Naive thymus-derived CD4-positive, alpha-beta T cell (primary cell): ENCODE measurements at regions of chr22 and their contacts with region 1.

Region 1: DNA sequence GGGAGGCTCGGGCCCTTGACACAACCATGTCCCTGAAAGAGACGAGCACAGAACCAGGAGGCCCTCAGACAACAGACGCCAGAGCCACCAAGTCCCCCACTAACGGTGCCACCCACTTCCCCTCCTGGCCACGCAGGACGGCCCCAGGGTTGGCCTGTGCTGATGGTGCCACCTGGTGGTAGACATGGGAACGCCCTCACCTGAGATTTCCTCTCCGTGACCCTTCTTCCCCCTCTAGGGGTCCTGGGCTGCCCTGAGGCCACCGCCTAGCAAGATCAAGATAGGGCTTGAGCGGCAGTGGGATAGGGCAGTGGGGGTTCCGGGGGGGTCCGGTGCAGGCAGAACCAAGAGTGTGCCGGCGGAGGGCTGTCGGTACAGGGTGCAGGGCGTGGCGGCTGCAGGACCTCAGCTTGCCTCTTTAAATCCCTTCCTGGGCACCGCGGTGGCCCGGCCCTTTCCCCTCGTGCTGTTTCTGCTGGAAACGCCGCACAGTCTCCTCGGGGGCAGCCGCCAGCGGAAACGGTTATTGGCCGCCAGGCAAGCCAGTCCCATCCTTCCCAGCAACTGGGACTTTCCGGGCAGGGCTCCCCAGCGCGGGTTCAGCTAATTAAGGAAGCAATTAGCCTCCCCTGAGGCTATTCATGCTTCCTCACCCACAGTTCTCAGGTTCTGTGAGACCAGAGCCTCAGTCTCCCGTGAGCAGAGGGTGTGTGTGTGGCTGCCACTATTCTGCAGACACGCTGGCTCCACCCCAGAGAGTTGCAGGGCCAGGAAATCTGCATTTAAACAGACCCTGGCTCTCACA is 5.5 kb upstream of the NFAM1 start:
- DNase-seq: peak; percentile 71 to 90 (median 81)
- ATAC-seq: peak; percentile 96
- H3K4me3 ChIP-seq: peak overlapping the region; percentile 67
- H3K4me3 Mint-ChIP-seq: peak overlapping the region; percentile 65 to 88 (median 74)
- H3K27ac ChIP-seq: no peak overlapping the region
- H3K27ac Mint-ChIP-seq: peak overlapping the region in 4 of 9 donors; percentile 48 to 87 (median 78)
- H3K4me1 ChIP-seq: peaks cover 0 to 7% of the 10 kb centered on the region in 2 donors
- H3K4me1 Mint-ChIP-seq: peaks cover 0 to 33% (median 12%) of the 10 kb centered on the region in 7 donors
- H3K27me3 ChIP-seq: no peaks in the 10 kb centered on the region
- H3K27me3 Mint-ChIP-seq: peaks cover 0 to 11% (median 0%) of the 10 kb centered on the region in 5 donors

Region 2: GRCh38 chr22:41957941-41958556 is 479.6 kb before region 1 on chr22:
- CTCF ChIA-PET with region 1: no interaction called
- POLR2A ChIA-PET with region 1: no interaction called
- intact Hi-C with region 1: loop called in 1 of 2 experiments (anchors 1 kb)
- DNase-seq: peak in 2 of 9 donors; percentile 23 to 28
- ATAC-seq: peak; percentile 50
- H3K4me3 ChIP-seq: no peak overlapping the region
- H3K4me3 Mint-ChIP-seq: peak overlapping the region in 6 of 10 donors; percentile 3 to 67 (median 50)
- H3K27ac ChIP-seq: no peak overlapping the region
- H3K27ac Mint-ChIP-seq: no peak overlapping the region
- H3K4me1 ChIP-seq: peaks cover 3 to 4% of the 10 kb centered on the region in 2 donors
- H3K4me1 Mint-ChIP-seq: peaks cover 0 to 5% (median 4%) of the 10 kb centered on the region in 7 donors
- H3K27me3 ChIP-seq: no peaks in the 10 kb centered on the region
- H3K27me3 Mint-ChIP-seq: peaks cover 0 to 1% (median 0%) of the 10 kb centered on the region in 5 donors

Region 3: DNA sequence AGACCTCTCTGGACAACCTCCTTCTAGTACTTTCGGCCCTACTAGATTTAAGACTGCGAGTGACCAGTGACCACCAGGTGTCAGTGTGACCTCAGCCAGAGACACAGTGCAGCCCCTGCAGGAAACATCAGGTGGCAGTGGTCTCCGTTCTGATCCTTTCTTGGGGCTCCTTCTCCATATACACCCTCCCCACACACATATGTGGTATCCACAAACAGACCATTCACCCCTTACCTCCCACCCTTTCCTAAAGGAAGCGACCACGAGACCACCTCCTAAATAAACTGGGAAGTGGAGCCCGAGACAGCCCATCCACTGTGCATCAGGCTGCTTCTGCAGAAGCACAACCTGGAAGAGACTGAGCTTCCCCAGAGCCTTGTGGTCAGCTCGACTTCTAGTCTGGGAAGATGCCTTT is 268.6 kb before region 1 on chr22:
- CTCF ChIA-PET with region 1: interaction called, 7 read pairs
- POLR2A ChIA-PET with region 1: no interaction called
- intact Hi-C with region 1: loop called (anchors 1 kb)
- DNase-seq: peak; percentile 36 to 77 (median 60)
- ATAC-seq: peak; percentile 89
- H3K4me3 ChIP-seq: no peak overlapping the region
- H3K4me3 Mint-ChIP-seq: no peak overlapping the region
- H3K27ac ChIP-seq: no peak overlapping the region
- H3K27ac Mint-ChIP-seq: peak overlapping the region in 1 of 9 donors; percentile 31
- H3K4me1 ChIP-seq: peaks cover 0 to 15% of the 10 kb centered on the region in 2 donors
- H3K4me1 Mint-ChIP-seq: peaks cover 13 to 39% (median 33%) of the 10 kb centered on the region in 7 donors
- H3K27me3 ChIP-seq: no peaks in the 10 kb centered on the region
- H3K27me3 Mint-ChIP-seq: no peaks in the 10 kb centered on the region

Region 4: DNA sequence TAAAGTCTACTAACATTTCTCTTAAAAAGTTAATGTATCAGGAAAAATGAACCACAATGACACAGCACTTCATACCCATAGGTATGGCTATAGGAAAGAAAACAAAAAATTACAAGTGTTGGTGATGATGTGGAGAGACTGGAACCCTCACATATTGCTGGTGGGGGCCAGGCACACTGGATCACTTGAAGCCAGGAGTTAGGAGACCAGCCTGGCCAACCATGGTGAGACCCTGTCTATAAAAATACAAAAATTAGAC is 194.0 kb before region 1 on chr22:
- CTCF ChIA-PET with region 1: no interaction called
- POLR2A ChIA-PET with region 1: no interaction called
- intact Hi-C with region 1: no loop called
- DNase-seq: no peak
- ATAC-seq: no peak
- H3K4me3 ChIP-seq: no peak overlapping the region
- H3K4me3 Mint-ChIP-seq: no peak overlapping the region
- H3K27ac ChIP-seq: no peak overlapping the region
- H3K27ac Mint-ChIP-seq: peak overlapping the region in 1 of 9 donors; percentile 18
- H3K4me1 ChIP-seq: peaks cover 0 to 3% of the 10 kb centered on the region in 2 donors
- H3K4me1 Mint-ChIP-seq: peaks cover 22 to 73% (median 64%) of the 10 kb centered on the region in 7 donors
- H3K27me3 ChIP-seq: no peaks in the 10 kb centered on the region
- H3K27me3 Mint-ChIP-seq: no peaks in the 10 kb centered on the region

Region 5: DNA sequence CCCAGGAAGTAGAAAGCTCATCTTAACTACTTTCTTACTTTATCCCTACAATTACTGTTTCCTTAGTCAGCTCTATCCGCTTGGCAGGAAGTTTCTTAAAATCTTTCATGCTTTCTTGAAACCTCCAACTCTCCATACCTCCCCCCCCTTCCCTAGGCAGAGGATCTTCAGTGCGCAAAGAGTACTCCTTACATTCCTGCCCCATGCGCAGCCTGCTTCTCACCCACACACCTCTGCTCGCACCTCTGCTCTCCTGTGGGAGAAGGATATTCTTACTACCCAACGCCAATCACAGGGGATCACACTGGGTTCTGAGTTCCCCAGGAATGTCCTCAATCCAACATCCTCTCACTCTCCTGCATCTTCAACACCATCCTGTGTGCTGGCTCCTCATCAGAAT is 179.6 kb before region 1 on chr22:
- CTCF ChIA-PET with region 1: no interaction called
- POLR2A ChIA-PET with region 1: no interaction called
- intact Hi-C with region 1: no loop called
- DNase-seq: no peak
- ATAC-seq: no peak
- H3K4me3 ChIP-seq: no peak overlapping the region
- H3K4me3 Mint-ChIP-seq: peak overlapping the region in 2 of 10 donors; percentile 10 to 57
- H3K27ac ChIP-seq: no peak overlapping the region
- H3K27ac Mint-ChIP-seq: peak overlapping the region in 3 of 9 donors; percentile 48 to 80 (median 48)
- H3K4me1 ChIP-seq: peaks cover 32 to 42% of the 10 kb centered on the region in 2 donors
- H3K4me1 Mint-ChIP-seq: peaks cover 50 to 93% (median 86%) of the 10 kb centered on the region in 7 donors
- H3K27me3 ChIP-seq: no peaks in the 10 kb centered on the region
- H3K27me3 Mint-ChIP-seq: no peaks in the 10 kb centered on the region

Region 6: GRCh38 chr22:42277988-42278776 is 159.5 kb before region 1 on chr22:
- CTCF ChIA-PET with region 1: interaction called, 15 read pairs
- POLR2A ChIA-PET with region 1: interaction called, 3 read pairs
- intact Hi-C with region 1: no loop called
- DNase-seq: no peak
- ATAC-seq: no peak
- H3K4me3 ChIP-seq: no peak overlapping the region
- H3K4me3 Mint-ChIP-seq: no peak overlapping the region
- H3K27ac ChIP-seq: no peak overlapping the region
- H3K27ac Mint-ChIP-seq: no peak overlapping the region
- H3K4me1 ChIP-seq: no peaks in the 10 kb centered on the region
- H3K4me1 Mint-ChIP-seq: peaks cover 10 to 29% (median 15%) of the 10 kb centered on the region in 7 donors
- H3K27me3 ChIP-seq: no peaks in the 10 kb centered on the region
- H3K27me3 Mint-ChIP-seq: peaks cover 0 to 15% (median 4%) of the 10 kb centered on the region in 5 donors

Region 7: DNA sequence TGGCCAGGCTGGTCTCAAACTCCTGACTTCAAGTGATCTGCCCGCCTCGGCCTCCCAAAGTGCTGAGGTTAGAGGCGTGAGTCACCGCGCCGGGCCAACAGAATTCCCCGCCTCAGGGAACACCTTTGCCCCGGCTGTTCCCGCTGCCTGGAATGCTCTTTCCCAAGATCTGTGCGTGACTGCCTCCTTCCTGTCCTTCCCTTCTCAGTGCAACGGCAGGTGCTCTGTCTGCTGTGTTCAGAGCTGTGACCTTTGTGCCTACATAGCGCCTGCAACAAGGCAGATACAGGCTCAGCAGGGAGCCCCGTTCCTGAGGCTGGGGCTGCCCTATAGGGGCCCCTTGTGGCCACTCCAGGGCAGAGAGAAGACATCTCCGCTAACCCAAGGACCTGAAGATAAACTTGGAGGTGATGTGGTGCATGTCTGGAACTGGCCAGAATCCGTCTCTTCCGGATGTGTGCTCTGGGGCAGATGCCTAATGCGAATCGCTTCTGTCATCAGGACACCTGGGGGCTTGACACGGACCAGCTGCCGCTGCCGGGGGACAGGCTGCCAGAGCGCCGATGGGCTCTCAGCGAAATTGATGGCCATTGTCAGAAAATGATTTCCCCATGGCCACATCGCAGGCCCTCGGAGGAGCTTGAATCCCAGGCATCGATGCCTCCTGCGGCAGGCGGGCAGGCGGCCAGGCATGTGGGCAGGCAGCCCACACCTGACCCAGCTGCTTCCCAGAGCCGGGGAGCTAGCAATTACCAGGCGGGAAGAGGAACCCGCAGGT is 123.7 kb before region 1 on chr22:
- CTCF ChIA-PET with region 1: interaction called, 3 read pairs
- POLR2A ChIA-PET with region 1: no interaction called
- intact Hi-C with region 1: loop called in 1 of 2 experiments (anchors 1 kb)
- DNase-seq: peak in 8 of 9 donors; percentile 34 to 73 (median 60)
- ATAC-seq: peak; percentile 75
- H3K4me3 ChIP-seq: no peak overlapping the region
- H3K4me3 Mint-ChIP-seq: peak overlapping the region in 9 of 10 donors; percentile 21 to 76 (median 68)
- H3K27ac ChIP-seq: no peak overlapping the region
- H3K27ac Mint-ChIP-seq: peak overlapping the region in 8 of 9 donors; percentile 43 to 95 (median 88)
- H3K4me1 ChIP-seq: peaks cover 23 to 46% of the 10 kb centered on the region in 2 donors
- H3K4me1 Mint-ChIP-seq: peaks cover 28 to 62% (median 52%) of the 10 kb centered on the region in 7 donors
- H3K27me3 ChIP-seq: no peaks in the 10 kb centered on the region
- H3K27me3 Mint-ChIP-seq: no peaks in the 10 kb centered on the region

Region 8: DNA sequence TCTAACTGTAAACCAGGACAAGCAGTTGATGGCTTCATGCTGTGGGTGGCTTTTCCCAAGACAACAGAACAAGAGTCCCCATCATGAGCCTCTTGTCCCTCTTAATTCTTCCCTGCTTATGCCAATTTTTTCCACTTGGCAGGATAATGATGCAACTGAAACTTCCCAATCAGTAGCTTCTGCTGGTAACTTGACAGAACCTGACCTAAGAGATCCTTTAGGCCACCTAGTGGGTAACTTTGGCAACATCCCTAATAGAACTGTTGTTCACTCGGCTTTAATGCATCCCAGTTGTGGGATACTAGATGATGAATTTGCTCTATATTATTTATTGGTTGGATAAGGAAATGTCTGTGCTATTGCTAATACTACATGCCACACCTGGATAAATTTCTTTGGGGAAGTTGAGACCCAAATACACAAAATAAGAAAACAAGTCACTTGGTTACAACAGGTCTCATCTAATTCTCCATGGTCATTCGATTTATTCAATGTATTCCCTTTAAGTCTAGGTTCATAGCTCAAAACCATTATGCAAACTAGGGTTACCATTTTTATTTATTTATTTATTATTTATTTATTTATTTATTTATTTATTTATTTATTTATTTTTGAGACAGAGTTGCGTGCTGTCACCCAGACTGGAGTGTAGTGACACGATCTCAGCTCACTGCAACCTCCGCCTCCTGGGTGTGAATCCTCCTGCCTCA is 35.9 kb after region 1 on chr22:
- CTCF ChIA-PET with region 1: interaction called, 5 read pairs
- POLR2A ChIA-PET with region 1: no interaction called
- intact Hi-C with region 1: loop called in 1 of 2 experiments (anchors 1 kb)
- DNase-seq: peak in 5 of 9 donors; percentile 10 to 42 (median 29)
- ATAC-seq: peak; percentile 57
- H3K4me3 ChIP-seq: no peak overlapping the region
- H3K4me3 Mint-ChIP-seq: no peak overlapping the region
- H3K27ac ChIP-seq: no peak overlapping the region
- H3K27ac Mint-ChIP-seq: peak overlapping the region in 2 of 9 donors; percentile 2 to 16
- H3K4me1 ChIP-seq: peaks cover 0 to 7% of the 10 kb centered on the region in 2 donors
- H3K4me1 Mint-ChIP-seq: peaks cover 3 to 12% (median 9%) of the 10 kb centered on the region in 7 donors
- H3K27me3 ChIP-seq: no peaks in the 10 kb centered on the region
- H3K27me3 Mint-ChIP-seq: peaks cover 0 to 26% (median 0%) of the 10 kb centered on the region in 5 donors